AG04449 (cell line): ENCODE measurements at regions of chr1 and their contacts with region 1.

Region 1: GRCh38 chr1:199113265-199113869 is 474.5 kb downstream of the PTPRC start:
- DNase-seq: peak; percentile 37
- H3K4me3 ChIP-seq: no peak overlapping the region
- CTCF ChIP-seq: peak; percentile 85

Region 2: DNA sequence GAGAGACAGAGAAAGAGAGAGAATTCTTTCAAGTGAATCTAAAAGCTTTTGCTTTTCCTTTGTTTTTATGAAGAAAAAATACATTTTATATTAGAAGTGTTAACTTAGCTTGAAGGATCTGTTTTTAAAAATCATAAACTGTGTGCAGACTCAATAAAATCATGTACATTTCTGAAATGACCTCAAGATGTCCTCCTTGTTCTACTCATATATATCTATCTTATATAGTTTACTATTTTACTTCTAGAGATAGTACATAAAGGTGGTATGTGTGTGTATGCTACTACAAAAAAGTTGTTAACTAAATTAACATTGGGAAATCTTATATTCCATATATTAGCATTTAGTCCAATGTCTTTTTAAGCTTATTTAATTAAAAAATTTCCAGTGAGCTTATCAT is 356.9 kb before region 1 on chr1:
- CTCF ChIA-PET with region 1: interaction called, 18 read pairs
- POLR2A ChIA-PET with region 1: no interaction called
- DNase-seq: no peak
- H3K4me3 ChIP-seq: no peak overlapping the region
- CTCF ChIP-seq: no peak

Region 3: GRCh38 chr1:198763298-198763714 is 350.1 kb before region 1 on chr1:
- CTCF ChIA-PET with region 1: interaction called, 15 read pairs
- POLR2A ChIA-PET with region 1: no interaction called
- DNase-seq: no peak
- H3K4me3 ChIP-seq: no peak overlapping the region
- CTCF ChIP-seq: no peak

Region 4: DNA sequence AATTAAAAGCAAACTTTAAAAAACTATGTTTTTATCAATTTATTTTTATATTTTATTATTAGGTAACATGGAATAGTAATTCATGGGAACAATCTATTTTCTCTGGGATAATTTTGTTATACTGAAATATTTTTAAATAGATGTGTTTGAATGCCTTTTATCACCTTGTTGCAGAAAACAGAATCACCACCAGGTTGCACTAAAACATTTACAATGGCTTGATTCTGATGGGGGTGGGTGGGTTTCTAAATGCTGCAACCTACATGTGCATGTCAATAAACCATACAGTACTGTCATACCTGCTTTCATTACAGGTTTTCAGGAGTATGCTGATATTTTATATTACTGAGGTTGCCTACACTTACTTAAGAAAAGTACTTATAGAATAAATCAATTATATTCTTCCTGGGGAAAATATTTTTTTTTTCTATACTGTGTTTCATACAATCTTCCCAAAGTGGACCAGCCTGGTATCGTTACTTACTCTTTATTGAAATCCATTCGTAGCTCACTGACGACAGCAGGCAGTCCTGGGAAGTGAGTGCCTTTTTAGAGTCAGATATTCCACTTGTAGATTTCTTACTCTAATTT is 341.7 kb before region 1 on chr1:
- CTCF ChIA-PET with region 1: interaction called, 19 read pairs
- POLR2A ChIA-PET with region 1: no interaction called
- DNase-seq: no peak
- H3K4me3 ChIP-seq: no peak overlapping the region
- CTCF ChIP-seq: peak; percentile 40

Region 5: GRCh38 chr1:199073166-199073565 is 40.2 kb before region 1 on chr1:
- CTCF ChIA-PET with region 1: interaction called, 10 read pairs
- POLR2A ChIA-PET with region 1: no interaction called
- DNase-seq: no peak
- H3K4me3 ChIP-seq: no peak overlapping the region
- CTCF ChIP-seq: no peak

Region 6: DNA sequence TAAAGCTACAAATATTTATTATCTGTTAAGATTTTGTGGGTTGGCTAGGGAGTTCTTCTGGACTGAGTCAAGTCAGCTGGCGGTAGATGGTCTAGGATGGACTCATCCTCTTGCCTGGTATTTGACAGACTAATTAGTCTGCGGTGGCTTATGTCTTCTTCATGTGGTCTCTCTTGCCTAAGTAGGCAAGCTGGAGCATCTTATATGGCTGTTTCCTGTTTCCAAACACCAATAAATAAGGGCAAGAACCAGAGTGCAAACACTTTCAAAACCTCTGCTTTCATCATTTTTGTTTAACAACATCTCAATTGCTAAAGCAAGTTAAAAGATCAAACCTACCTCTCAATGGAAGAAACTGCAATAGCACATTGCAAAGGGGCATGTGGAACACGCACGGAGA is 10.2 kb after region 1 on chr1:
- CTCF ChIA-PET with region 1: interaction called, 27 read pairs
- POLR2A ChIA-PET with region 1: no interaction called
- DNase-seq: peak; percentile 78
- H3K4me3 ChIP-seq: no peak overlapping the region
- CTCF ChIP-seq: no peak

Region 7: GRCh38 chr1:199272643-199273086 is 159.3 kb after region 1 on chr1:
- CTCF ChIA-PET with region 1: no interaction called
- POLR2A ChIA-PET with region 1: no interaction called
- DNase-seq: peak; percentile 79
- H3K4me3 ChIP-seq: no peak overlapping the region
- CTCF ChIP-seq: no peak

Region 8: GRCh38 chr1:199463521-199464128 is 350.3 kb after region 1 on chr1:
- CTCF ChIA-PET with region 1: interaction called, 16 read pairs
- POLR2A ChIA-PET with region 1: no interaction called
- DNase-seq: peak; percentile 10
- H3K4me3 ChIP-seq: no peak overlapping the region
- CTCF ChIP-seq: peak; percentile 52